ENCODE measurements at regions of chr19 and their contacts with region 1.

Region 1: DNA sequence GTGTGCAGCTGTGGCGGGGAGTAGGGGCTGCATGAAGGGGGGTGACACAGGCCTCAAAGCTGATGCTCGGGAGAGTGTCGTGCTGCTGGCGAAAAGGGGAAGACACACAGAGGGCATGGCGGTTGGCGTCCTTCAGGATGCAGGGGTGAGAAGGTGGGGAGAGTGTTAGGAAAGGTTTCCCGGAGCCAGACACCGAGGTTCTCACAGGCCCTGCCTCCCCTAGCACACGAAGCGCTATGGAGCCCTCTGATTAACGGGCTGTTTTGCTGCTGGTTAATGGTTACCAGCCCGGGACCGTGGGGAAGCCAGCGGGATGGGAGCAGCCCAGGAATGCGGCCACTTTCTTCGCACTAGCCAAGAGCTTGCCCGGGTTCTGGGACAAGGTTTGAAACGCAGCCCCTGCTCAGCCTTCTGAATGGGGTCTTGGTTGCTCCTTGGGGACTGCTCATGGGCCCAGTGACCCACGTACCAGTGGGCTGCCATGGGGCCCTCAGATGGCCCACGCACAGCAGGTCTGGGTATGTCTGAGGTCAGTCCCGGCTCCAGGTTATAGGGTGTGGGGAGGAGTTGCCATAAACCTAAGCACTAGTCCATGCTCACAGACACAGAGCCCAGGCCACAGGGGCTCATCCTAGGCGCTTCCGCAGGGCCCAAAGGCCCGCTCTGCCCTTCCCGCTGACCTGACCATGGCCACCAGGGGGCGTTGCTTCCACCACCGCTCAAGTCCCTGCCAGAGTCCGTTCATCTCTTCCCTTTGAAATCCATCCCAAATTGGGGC is 31.3 kb upstream of the ISYNA1 start:
- H3K4me3 ChIP-seq: no peak overlapping the region
- H3K27ac ChIP-seq: no peak overlapping the region
- H3K4me1 ChIP-seq: peaks cover 4% of the 10 kb centered on the region; the same call in 1 of the 2 replicates
- CTCF ChIP-seq: peak; percentile 86

Region 2: DNA sequence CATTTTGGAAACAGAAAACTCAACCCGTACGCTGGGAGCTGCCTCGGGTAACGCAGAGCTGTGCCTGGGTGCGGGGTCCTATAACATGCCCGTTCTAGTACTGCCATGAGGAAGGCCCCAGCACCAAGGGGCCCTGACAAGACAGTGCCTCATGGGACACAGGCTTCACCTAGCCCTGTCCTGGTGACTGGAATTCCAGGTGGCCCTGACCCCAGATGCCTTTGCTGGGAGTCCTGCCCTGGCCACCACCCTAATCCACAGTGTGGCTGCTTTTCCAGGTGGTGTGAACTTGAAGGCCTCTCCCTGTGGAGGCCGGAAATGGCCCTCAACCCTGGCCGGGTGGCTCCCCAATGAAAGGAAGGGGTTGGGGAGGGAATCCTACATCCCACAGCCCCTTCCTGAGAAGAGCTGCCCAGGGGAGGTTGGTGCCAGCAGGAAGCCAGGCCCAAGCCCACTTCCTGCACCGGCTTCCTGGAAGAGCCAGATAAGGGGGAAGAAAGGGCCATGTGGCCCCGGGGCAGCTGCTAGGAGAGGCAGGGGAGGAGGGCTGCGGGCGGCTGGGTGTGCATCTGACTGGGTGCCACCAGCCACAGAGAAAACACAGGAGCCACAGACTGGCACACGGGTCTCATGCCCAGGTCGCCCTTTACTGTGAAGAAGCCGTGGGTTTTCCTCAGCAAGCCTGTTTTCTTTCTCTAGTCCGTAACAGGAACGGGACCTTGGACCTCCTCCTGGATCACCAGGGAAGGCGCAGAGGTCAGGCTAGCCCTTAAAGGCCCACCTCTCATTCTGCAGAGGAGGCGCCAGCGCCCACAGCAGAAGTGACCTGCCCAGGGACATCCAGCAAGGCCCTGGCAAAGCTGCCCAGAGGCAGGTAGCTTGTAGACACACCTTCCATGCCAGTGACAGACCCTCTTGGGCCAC is 151.1 kb before region 1 on chr19:
- CTCF ChIA-PET with region 1: no interaction called
- POLR2A ChIA-PET with region 1: no interaction called
- H3K4me3 ChIP-seq: no peak overlapping the region
- H3K27ac ChIP-seq: no peak overlapping the region
- H3K4me1 ChIP-seq: 0 out of 2 replicates have a peak, but pooled peaks cover 4% of the 10 kb centered on the region
- CTCF ChIP-seq: no peak

Region 3: GRCh38 chr19:18412610-18413239 is 56.5 kb before region 1 on chr19:
- CTCF ChIA-PET with region 1: no interaction called
- POLR2A ChIA-PET with region 1: no interaction called
- H3K4me3 ChIP-seq: no peak overlapping the region
- H3K27ac ChIP-seq: no peak overlapping the region
- H3K4me1 ChIP-seq: peaks cover 9% of the 10 kb centered on the region; the same call in 1 of the 2 replicates
- CTCF ChIP-seq: no peak

Region 4: DNA sequence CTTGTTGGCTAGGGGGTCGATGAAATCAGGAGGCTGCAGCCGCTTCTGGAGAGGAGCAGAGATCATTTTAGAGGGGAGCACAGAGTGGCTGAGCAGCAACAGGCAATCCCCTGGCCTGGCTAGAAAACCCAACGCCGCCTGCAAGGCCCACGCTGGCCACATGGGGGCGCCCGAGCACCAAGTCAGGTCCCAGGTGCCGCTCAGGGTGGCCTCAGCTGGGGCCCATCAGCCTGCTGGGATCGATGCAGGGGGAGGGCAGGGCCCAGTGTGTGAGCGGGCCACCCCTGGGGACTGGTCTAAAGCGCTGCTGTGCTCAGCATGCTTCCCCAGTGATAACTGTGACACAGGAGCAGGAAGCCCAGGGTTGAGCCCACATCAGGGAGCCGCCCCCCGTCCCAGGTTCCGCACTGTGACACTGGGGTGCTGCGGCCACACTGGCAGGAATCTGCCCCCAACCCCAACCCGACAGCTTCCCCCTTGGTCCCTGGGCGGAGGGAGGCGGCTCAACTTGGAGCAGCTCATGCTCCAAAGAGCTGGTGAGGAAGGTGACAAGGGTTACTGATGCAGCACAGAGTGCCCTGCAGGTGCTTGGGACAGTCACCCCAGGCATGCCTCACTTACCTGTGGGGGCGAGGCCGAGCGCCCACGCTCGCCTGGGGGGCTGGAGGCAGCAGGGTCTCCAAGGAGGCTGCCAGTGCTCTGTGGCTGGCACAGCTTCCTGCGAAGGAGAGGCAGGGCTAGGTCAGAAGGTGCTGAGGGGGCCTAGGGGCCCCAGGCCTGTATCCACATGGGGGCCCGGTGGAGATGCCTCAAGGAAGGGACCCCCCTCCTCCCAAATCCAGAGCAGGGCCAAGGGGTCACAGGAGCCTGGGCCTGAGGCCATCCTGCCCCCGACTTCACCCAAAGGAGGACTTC is 18.1 kb before region 1 on chr19:
- CTCF ChIA-PET with region 1: interaction called, 13 read pairs
- POLR2A ChIA-PET with region 1: no interaction called
- H3K4me3 ChIP-seq: no peak overlapping the region
- H3K27ac ChIP-seq: no peak overlapping the region
- H3K4me1 ChIP-seq: no peaks in the 10 kb centered on the region
- CTCF ChIP-seq: peak; percentile 95

Region 5: DNA sequence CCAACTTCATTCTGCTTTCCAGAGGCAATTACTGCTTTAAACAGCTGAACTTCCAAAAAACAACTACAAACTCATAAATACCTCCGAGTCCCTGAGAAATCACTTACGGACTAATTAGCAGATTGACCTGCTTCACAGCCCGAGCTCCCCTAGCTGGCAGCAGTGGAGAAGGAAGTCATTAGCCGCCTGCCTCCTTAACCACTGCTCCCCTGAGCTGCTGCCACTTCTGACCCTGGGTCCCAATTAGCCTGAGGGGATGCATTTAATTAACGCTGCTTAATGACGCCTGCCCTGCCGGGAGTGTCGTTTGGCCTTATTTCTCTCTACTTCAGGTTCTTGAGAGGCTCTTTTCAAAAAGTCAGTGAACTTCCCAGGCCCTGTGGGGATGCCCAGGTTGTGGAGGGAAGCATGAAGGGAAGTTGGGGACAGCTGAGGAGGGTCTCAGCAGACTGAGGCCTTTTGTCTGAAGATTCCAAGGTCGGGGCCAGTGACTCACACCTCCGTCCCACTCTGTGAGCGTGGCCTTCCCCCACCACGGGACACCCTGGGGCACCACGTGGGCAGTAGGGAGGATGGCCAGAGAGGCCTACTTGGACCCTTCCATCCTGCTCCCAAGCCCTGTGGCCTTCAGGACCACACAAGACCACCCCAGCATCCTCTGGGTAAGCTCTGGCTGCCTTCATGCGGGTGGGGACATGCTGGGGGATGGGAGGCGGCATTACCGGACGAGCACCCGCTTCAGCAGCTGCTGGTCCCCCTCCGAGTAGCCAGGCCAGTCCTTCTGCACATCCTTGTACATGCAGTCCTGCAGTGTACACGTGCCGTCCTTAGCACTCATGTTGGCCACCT is 11.6 kb before region 1 on chr19:
- CTCF ChIA-PET with region 1: interaction called, 12 read pairs
- POLR2A ChIA-PET with region 1: no interaction called
- H3K4me3 ChIP-seq: no peak overlapping the region
- H3K27ac ChIP-seq: no peak overlapping the region
- H3K4me1 ChIP-seq: no peaks in the 10 kb centered on the region
- CTCF ChIP-seq: no peak

Region 6: GRCh38 chr19:18488838-18489626 is 19.8 kb after region 1 on chr19:
- CTCF ChIA-PET with region 1: interaction called, 18 read pairs
- POLR2A ChIA-PET with region 1: no interaction called
- H3K4me3 ChIP-seq: no peak overlapping the region
- H3K27ac ChIP-seq: no peak overlapping the region
- H3K4me1 ChIP-seq: peaks cover 10% of the 10 kb centered on the region
- CTCF ChIP-seq: peak; percentile 47; the same call in 1 of the 2 replicates

Region 7: DNA sequence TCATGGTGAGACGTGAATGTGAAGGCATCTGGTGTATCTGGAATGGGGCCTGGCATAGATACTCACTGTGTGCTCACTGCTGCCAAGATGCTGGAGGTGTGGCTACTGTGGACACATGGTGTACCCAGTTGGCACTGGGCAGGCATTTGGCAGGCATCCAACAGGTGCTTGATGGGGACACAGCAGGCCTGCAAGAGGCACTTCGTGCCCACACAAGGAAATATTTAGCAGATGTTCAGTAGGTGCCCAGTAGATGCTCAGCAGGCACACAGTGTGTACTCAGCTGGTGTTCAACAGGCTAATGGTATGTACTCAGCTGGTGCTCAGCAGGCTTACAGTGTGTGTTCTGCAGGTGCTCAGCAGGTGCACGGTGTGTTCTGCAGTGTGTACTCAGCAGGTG is 228.4 kb after region 1 on chr19:
- CTCF ChIA-PET with region 1: no interaction called
- POLR2A ChIA-PET with region 1: no interaction called
- H3K4me3 ChIP-seq: no peak overlapping the region
- H3K27ac ChIP-seq: no peak overlapping the region
- H3K4me1 ChIP-seq: peaks cover 8% of the 10 kb centered on the region
- CTCF ChIP-seq: no peak